CD8-positive, alpha-beta T cell (primary cell): ENCODE measurements at regions of chr16 and their contacts with region 1.

Region 1: GRCh38 chr16:11312718-11313492 is 31.8 kb upstream of the PRM1 start:
- DNase-seq: peak in 3 of 9 experiments; percentile 28 to 58 (median 33)
- ATAC-seq: peak; percentile 16
- H3K4me3 ChIP-seq: no peak overlapping the region
- H3K4me3 Mint-ChIP-seq: peak overlapping the region; percentile 20
- H3K27ac ChIP-seq: no peak overlapping the region
- H3K27ac Mint-ChIP-seq: peak overlapping the region; percentile 41
- H3K4me1 ChIP-seq: peaks cover 48% of the 10 kb centered on the region
- H3K4me1 Mint-ChIP-seq: peaks cover 48% of the 10 kb centered on the region
- H3K27me3 ChIP-seq: no peaks in the 10 kb centered on the region
- H3K27me3 Mint-ChIP-seq: no peaks in the 10 kb centered on the region
- CTCF ChIP-seq: no peak

Region 2: GRCh38 chr16:10895053-10895946 is 417.6 kb before region 1 on chr16:
- CTCF ChIA-PET with region 1: no interaction called
- POLR2A ChIA-PET with region 1: no interaction called
- intact Hi-C with region 1: no loop called
- DNase-seq: peak in 4 of 9 experiments; percentile 15 to 43 (median 36)
- ATAC-seq: no peak
- H3K4me3 ChIP-seq: no peak overlapping the region
- H3K4me3 Mint-ChIP-seq: no peak overlapping the region
- H3K27ac ChIP-seq: no peak overlapping the region
- H3K27ac Mint-ChIP-seq: no peak overlapping the region
- H3K4me1 ChIP-seq: no peaks in the 10 kb centered on the region
- H3K4me1 Mint-ChIP-seq: no peaks in the 10 kb centered on the region
- H3K27me3 ChIP-seq: no peaks in the 10 kb centered on the region
- H3K27me3 Mint-ChIP-seq: peaks cover 6% of the 10 kb centered on the region
- CTCF ChIP-seq: no peak

Region 3: GRCh38 chr16:11345040-11345862 is 32.3 kb after region 1 on chr16 and contains the start of gene RMI2:
- CTCF ChIA-PET with region 1: no interaction called
- POLR2A ChIA-PET with region 1: no interaction called
- intact Hi-C with region 1: loop called (anchors 2 to 5 kb)
- DNase-seq: peak; percentile 90 to 97 (median 95)
- ATAC-seq: peak; percentile 100
- H3K4me3 ChIP-seq: peak within 1 kb of the TSS; percentile 54 to 60
- H3K4me3 Mint-ChIP-seq: peak within 1 kb of the TSS; percentile 84
- H3K27ac ChIP-seq: no peak within 1 kb of the TSS
- H3K27ac Mint-ChIP-seq: peak within 1 kb of the TSS; percentile 83
- H3K4me1 ChIP-seq: no peaks in the 10 kb centered on the region
- H3K4me1 Mint-ChIP-seq: peaks cover 8% of the 10 kb centered on the region
- H3K27me3 ChIP-seq: no peaks in the 10 kb centered on the region
- H3K27me3 Mint-ChIP-seq: no peaks in the 10 kb centered on the region
- CTCF ChIP-seq: no peak
- total RNA-seq, gene RMI2: 0.69 to 0.73 TPM